ENCODE measurements at regions of chr6 and their contacts with region 1.

Region 1: DNA sequence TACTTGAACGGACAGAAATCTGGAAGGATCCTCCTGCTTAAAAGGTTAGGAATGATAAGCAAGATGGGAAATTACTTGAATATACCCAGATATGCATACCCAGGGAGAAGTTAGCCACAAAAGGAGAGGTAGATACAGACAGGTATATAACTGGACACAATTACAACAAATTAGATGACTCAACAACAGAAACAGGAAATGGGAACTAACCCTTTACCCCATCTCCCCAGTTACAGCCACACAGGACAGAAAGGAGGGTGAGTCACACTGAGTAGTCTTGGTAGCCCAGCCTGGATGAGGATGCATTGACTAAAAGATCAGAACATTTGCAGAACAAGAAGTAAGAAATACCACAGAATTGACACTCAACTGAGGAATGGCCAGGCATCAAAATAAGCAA is 61.2 kb downstream of the C6orf52 start:
- DNase-seq: peak; percentile 66
- H3K4me3 ChIP-seq: no peak overlapping the region
- H3K27ac ChIP-seq: no peak overlapping the region
- H3K27me3 ChIP-seq: no peaks in the 10 kb centered on the region
- CTCF ChIP-seq: no peak

Region 2: GRCh38 chr6:10579803-10580202 is 53.4 kb before region 1 on chr6:
- CTCF ChIA-PET with region 1: interaction called, 10 read pairs
- POLR2A ChIA-PET with region 1: no interaction called
- DNase-seq: no peak
- H3K4me3 ChIP-seq: no peak overlapping the region
- H3K27ac ChIP-seq: no peak overlapping the region
- H3K27me3 ChIP-seq: no peaks in the 10 kb centered on the region
- CTCF ChIP-seq: no peak

Region 3: GRCh38 chr6:11108425-11109125 is 475.4 kb after region 1 on chr6:
- CTCF ChIA-PET with region 1: no interaction called
- POLR2A ChIA-PET with region 1: no interaction called
- DNase-seq: no peak
- H3K4me3 ChIP-seq: no peak overlapping the region
- H3K27ac ChIP-seq: no peak overlapping the region
- H3K27me3 ChIP-seq: no peaks in the 10 kb centered on the region
- CTCF ChIP-seq: no peak